ENCODE measurements at regions of chr15 and their contacts with region 1.

Region 1: GRCh38 chr15:63839722-63840121 is 6.0 kb upstream of the HERC1 start:
- DNase-seq: no peak
- ATAC-seq: no peak
- H3K4me3 ChIP-seq: no peak overlapping the region
- H3K4me3 Mint-ChIP-seq: no peak overlapping the region
- H3K27ac ChIP-seq: no peak overlapping the region
- H3K27ac Mint-ChIP-seq: peak overlapping the region in 4 of 9 donors; percentile 8 to 69 (median 60)
- H3K4me1 ChIP-seq: peaks cover 6 to 17% of the 10 kb centered on the region in 2 donors
- H3K4me1 Mint-ChIP-seq: peaks cover under 1 to 27% (median 25%) of the 10 kb centered on the region in 7 donors
- H3K27me3 ChIP-seq: no peaks in the 10 kb centered on the region
- H3K27me3 Mint-ChIP-seq: peaks cover 0 to 23% (median 0%) of the 10 kb centered on the region in 5 donors

Region 2: DNA sequence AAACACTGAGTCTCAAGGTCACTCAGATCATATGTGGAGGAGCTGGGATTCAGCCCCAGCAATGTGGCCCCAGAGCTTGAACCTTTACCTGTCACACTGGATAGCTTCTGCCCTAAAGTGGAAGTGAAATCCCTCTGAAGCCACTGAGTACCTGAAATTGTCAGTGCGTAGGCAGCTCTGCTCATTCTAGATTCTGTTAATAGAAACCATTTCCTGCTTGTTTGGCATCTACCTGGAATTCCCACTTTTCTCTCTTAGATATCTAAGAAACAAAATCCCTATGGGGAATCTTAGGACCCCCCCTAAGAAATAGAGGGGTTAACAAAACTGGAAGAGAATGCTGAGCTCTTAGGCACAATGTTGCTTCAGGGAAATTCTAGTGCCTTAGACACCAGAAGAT is 212.8 kb before region 1 on chr15:
- CTCF ChIA-PET with region 1: no interaction called
- POLR2A ChIA-PET with region 1: no interaction called
- intact Hi-C with region 1: no loop called
- DNase-seq: no peak
- ATAC-seq: no peak
- H3K4me3 ChIP-seq: no peak overlapping the region
- H3K4me3 Mint-ChIP-seq: no peak overlapping the region
- H3K27ac ChIP-seq: no peak overlapping the region
- H3K27ac Mint-ChIP-seq: peak overlapping the region in 4 of 9 donors; percentile 12 to 56 (median 36)
- H3K4me1 ChIP-seq: no peaks in the 10 kb centered on the region
- H3K4me1 Mint-ChIP-seq: peaks cover 0 to 5% (median 0%) of the 10 kb centered on the region in 7 donors
- H3K27me3 ChIP-seq: no peaks in the 10 kb centered on the region
- H3K27me3 Mint-ChIP-seq: no peaks in the 10 kb centered on the region

Region 3: GRCh38 chr15:63860155-63860554 is 20.4 kb after region 1 on chr15:
- CTCF ChIA-PET with region 1: interaction called, 4 read pairs
- POLR2A ChIA-PET with region 1: interaction called, 4 read pairs
- intact Hi-C with region 1: loop called in 1 of 2 experiments (anchors 1 kb)
- DNase-seq: peak; percentile 27 to 90 (median 83)
- ATAC-seq: peak; percentile 95
- H3K4me3 ChIP-seq: no peak overlapping the region
- H3K4me3 Mint-ChIP-seq: peak overlapping the region; percentile 54 to 85 (median 76)
- H3K27ac ChIP-seq: peak overlapping the region; percentile 76
- H3K27ac Mint-ChIP-seq: peak overlapping the region; percentile 87 to 99 (median 97)
- H3K4me1 ChIP-seq: peaks cover 7 to 42% of the 10 kb centered on the region in 2 donors
- H3K4me1 Mint-ChIP-seq: peaks cover 29 to 78% (median 73%) of the 10 kb centered on the region in 7 donors
- H3K27me3 ChIP-seq: no peaks in the 10 kb centered on the region
- H3K27me3 Mint-ChIP-seq: no peaks in the 10 kb centered on the region

Region 4: GRCh38 chr15:63881431-63881830 is 41.7 kb after region 1 on chr15:
- CTCF ChIA-PET with region 1: no interaction called
- POLR2A ChIA-PET with region 1: no interaction called
- intact Hi-C with region 1: no loop called
- DNase-seq: no peak
- ATAC-seq: no peak
- H3K4me3 ChIP-seq: no peak overlapping the region
- H3K4me3 Mint-ChIP-seq: no peak overlapping the region
- H3K27ac ChIP-seq: no peak overlapping the region
- H3K27ac Mint-ChIP-seq: no peak overlapping the region
- H3K4me1 ChIP-seq: no peaks in the 10 kb centered on the region
- H3K4me1 Mint-ChIP-seq: peaks cover 0 to 13% (median 0%) of the 10 kb centered on the region in 7 donors
- H3K27me3 ChIP-seq: no peaks in the 10 kb centered on the region
- H3K27me3 Mint-ChIP-seq: no peaks in the 10 kb centered on the region